ENCODE measurements at regions of chr12 and their contacts with region 1.

Region 1: GRCh38 chr12:41277116-41277945 is 89.2 kb downstream of the PDZRN4 start:
- DNase-seq: peak; percentile 16
- H3K4me3 Mint-ChIP-seq: no peak overlapping the region
- H3K27ac Mint-ChIP-seq: no peak overlapping the region
- H3K4me1 Mint-ChIP-seq: peaks cover 17% of the 10 kb centered on the region
- H3K27me3 Mint-ChIP-seq: no peaks in the 10 kb centered on the region
- CTCF ChIP-seq: peak; percentile 47

Region 2: DNA sequence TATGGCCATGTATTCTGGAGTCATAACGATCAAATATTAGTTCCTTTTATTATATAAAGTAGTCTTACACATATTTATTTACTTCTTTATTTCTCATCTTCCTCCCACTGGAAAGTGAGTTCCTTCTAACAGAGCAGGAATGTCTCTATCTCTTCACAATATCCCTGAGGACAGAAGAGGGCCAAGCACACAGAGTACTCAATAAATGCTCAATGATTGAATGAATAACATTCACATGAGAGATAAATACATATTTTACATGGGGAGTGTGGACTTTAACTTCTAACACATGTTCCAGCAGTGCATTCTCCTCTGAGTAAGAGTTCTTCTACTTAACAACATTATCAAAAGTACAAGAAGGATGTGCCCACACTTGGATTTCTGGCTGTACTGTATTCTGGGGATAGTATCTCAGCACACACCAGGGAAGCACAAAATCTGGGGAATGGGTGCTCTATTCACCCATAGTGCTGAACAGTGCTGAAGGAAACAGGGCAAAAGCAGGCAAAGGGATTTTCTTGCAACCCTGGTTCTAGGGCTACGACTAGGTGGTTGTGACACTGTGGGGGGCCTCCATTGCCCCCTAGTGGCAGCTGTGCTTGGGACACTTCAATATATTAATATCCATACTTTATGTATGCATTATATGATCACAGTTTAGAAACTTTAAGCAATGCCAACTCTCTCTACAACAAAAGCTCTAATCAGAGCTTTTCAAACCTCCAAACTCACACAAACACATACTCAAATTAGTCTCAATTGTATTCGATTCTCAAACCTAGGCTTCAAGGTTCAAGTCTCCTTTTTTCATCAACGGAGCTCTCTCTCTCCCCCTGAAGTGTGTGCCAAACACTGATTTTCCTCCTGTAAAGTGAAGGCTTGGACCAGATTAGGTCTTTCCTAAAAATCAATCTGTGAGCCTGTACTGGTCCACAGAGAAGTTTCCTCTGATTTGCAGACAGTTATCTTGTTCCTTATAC is 1286.9 kb before region 1 on chr12:
- CTCF ChIA-PET with region 1: no interaction called
- intact Hi-C with region 1: no loop called
- DNase-seq: peak; percentile 60
- H3K4me3 Mint-ChIP-seq: no peak overlapping the region
- H3K27ac Mint-ChIP-seq: no peak overlapping the region
- H3K4me1 Mint-ChIP-seq: peaks cover 9% of the 10 kb centered on the region
- H3K27me3 Mint-ChIP-seq: no peaks in the 10 kb centered on the region
- CTCF ChIP-seq: peak; percentile 64

Region 3: GRCh38 chr12:40775661-40776060 is 501.7 kb before region 1 on chr12:
- CTCF ChIA-PET with region 1: no interaction called
- intact Hi-C with region 1: no loop called
- DNase-seq: no peak
- H3K4me3 Mint-ChIP-seq: no peak overlapping the region
- H3K27ac Mint-ChIP-seq: no peak overlapping the region
- H3K4me1 Mint-ChIP-seq: peaks cover 11% of the 10 kb centered on the region
- H3K27me3 Mint-ChIP-seq: no peaks in the 10 kb centered on the region
- CTCF ChIP-seq: no peak

Region 4: DNA sequence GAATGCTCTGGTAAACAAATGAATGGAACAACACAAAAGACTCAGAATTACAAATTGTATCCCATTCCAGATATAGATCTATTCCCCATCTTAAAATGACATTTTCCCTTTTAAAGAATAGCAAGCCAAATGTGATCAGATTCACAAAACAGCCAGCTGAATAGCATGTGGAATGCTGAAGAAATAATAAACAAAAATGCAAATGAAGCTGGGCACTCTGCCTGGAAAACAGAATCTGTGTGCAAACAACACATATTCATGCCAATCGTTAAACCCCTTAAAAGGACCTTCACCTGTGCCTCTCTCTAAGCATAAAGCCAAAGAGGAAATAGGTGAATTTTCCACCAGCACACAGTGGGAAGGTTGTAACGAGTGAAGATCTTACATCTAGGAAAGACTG is 157.1 kb before region 1 on chr12:
- CTCF ChIA-PET with region 1: no interaction called
- intact Hi-C with region 1: no loop called
- DNase-seq: no peak
- H3K4me3 Mint-ChIP-seq: no peak overlapping the region
- H3K27ac Mint-ChIP-seq: no peak overlapping the region
- H3K4me1 Mint-ChIP-seq: no peaks in the 10 kb centered on the region
- H3K27me3 Mint-ChIP-seq: no peaks in the 10 kb centered on the region
- CTCF ChIP-seq: no peak

Region 5: GRCh38 chr12:41367726-41368405 is 90.5 kb after region 1 on chr12:
- CTCF ChIA-PET with region 1: no interaction called
- intact Hi-C with region 1: loop called (anchors 10 kb)
- DNase-seq: no peak
- H3K4me3 Mint-ChIP-seq: no peak overlapping the region
- H3K27ac Mint-ChIP-seq: no peak overlapping the region
- H3K4me1 Mint-ChIP-seq: no peaks in the 10 kb centered on the region
- H3K27me3 Mint-ChIP-seq: no peaks in the 10 kb centered on the region
- CTCF ChIP-seq: no peak

Region 6: GRCh38 chr12:41564816-41565215 is 287.5 kb after region 1 on chr12:
- CTCF ChIA-PET with region 1: no interaction called
- intact Hi-C with region 1: loop called (anchors 10 kb)
- DNase-seq: no peak
- H3K4me3 Mint-ChIP-seq: no peak overlapping the region
- H3K27ac Mint-ChIP-seq: no peak overlapping the region
- H3K4me1 Mint-ChIP-seq: no peaks in the 10 kb centered on the region
- H3K27me3 Mint-ChIP-seq: no peaks in the 10 kb centered on the region
- CTCF ChIP-seq: no peak

Region 7: DNA sequence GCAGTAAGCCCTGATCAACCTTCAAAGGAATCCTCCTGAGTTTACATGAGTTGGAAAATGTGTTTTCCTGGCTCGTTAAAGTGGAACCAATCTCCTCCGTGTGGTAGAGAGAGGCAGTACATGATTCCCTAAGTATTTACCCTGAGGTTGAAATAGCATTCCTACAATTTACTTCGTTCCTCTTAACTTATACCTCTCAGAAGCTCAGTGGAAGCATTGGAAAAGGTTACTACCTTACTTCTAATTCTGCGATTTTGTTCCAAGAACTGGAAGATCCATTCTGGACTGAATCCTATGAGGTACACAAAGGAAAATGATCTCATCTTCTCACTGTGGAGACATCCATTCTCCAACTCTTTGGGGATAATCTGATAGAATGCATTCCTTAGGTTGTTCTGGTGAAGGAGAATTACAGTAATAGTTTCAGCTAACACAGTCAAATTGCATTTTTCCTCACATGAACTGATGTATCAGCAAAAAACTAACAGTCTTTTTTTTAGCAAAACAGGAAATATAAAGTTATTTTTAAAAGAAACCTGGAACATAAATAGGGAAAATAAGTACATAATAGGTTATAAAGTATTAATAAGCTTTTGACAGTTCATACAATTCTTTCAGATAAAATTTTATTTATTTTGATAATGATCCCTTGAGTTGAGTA is 386.4 kb after region 1 on chr12:
- CTCF ChIA-PET with region 1: no interaction called
- intact Hi-C with region 1: loop called (anchors 2 kb)
- DNase-seq: no peak
- H3K4me3 Mint-ChIP-seq: no peak overlapping the region
- H3K27ac Mint-ChIP-seq: no peak overlapping the region
- H3K4me1 Mint-ChIP-seq: no peaks in the 10 kb centered on the region
- H3K27me3 Mint-ChIP-seq: no peaks in the 10 kb centered on the region
- CTCF ChIP-seq: no peak

Region 8: GRCh38 chr12:42023733-42024494 is 746.6 kb after region 1 on chr12:
- CTCF ChIA-PET with region 1: interaction called, 5 read pairs
- intact Hi-C with region 1: loop called (anchors 2 kb)
- DNase-seq: peak; percentile 68
- H3K4me3 Mint-ChIP-seq: peak overlapping the region; percentile 64
- H3K27ac Mint-ChIP-seq: peak overlapping the region; percentile 31
- H3K4me1 Mint-ChIP-seq: no peaks in the 10 kb centered on the region
- H3K27me3 Mint-ChIP-seq: no peaks in the 10 kb centered on the region
- CTCF ChIP-seq: peak; percentile 71